CD4-positive, alpha-beta memory T cell (primary cell): ENCODE measurements at regions of chr14 and their contacts with region 1.

Region 1: GRCh38 chr14:98189062-98189461 is 1082.9 kb downstream of the BCL11B start:
- DNase-seq: peak in 1 of 5 donors; percentile 39
- H3K4me3 ChIP-seq: peak overlapping the region; percentile 38 to 42
- H3K4me3 Mint-ChIP-seq: peak overlapping the region; percentile 67 to 85 (median 80)
- H3K27ac ChIP-seq: peak overlapping the region; percentile 65
- H3K27ac Mint-ChIP-seq: peak overlapping the region; percentile 84 to 98 (median 94)
- H3K4me1 ChIP-seq: peaks cover 100% of the 10 kb centered on the region
- H3K4me1 Mint-ChIP-seq: peaks cover 84 to 100% (median 94%) of the 10 kb centered on the region in 4 donors
- H3K27me3 ChIP-seq: no peaks in the 10 kb centered on the region
- H3K27me3 Mint-ChIP-seq: no peaks in the 10 kb centered on the region

Region 2: GRCh38 chr14:97994020-97994531 is 195.0 kb before region 1 on chr14:
- CTCF ChIA-PET with region 1: no interaction called
- POLR2A ChIA-PET with region 1: interaction called, 4 read pairs
- intact Hi-C with region 1: loop called (anchors 5 kb)
- DNase-seq: peak; percentile 66 to 75 (median 71)
- H3K4me3 ChIP-seq: no peak overlapping the region
- H3K4me3 Mint-ChIP-seq: peak overlapping the region in 7 of 8 donors; percentile 28 to 72 (median 67)
- H3K27ac ChIP-seq: peak overlapping the region; percentile 50
- H3K27ac Mint-ChIP-seq: peak overlapping the region; percentile 82 to 96 (median 92)
- H3K4me1 ChIP-seq: peaks cover 59% of the 10 kb centered on the region
- H3K4me1 Mint-ChIP-seq: peaks cover 54 to 78% (median 66%) of the 10 kb centered on the region in 4 donors
- H3K27me3 ChIP-seq: no peaks in the 10 kb centered on the region
- H3K27me3 Mint-ChIP-seq: no peaks in the 10 kb centered on the region

Region 3: GRCh38 chr14:98167705-98168104 is 21.4 kb before region 1 on chr14:
- CTCF ChIA-PET with region 1: interaction called, 13 read pairs
- POLR2A ChIA-PET with region 1: interaction called, 475 read pairs
- intact Hi-C with region 1: no loop called
- DNase-seq: peak in 2 of 5 donors; percentile 22 to 54
- H3K4me3 ChIP-seq: peak overlapping the region in 1 of 2 donors; percentile 15
- H3K4me3 Mint-ChIP-seq: peak overlapping the region in 7 of 8 donors; percentile 60 to 90 (median 71)
- H3K27ac ChIP-seq: peak overlapping the region; percentile 45
- H3K27ac Mint-ChIP-seq: peak overlapping the region; percentile 79 to 99 (median 90)
- H3K4me1 ChIP-seq: peaks cover 63% of the 10 kb centered on the region
- H3K4me1 Mint-ChIP-seq: peaks cover 53 to 82% (median 68%) of the 10 kb centered on the region in 4 donors
- H3K27me3 ChIP-seq: no peaks in the 10 kb centered on the region
- H3K27me3 Mint-ChIP-seq: no peaks in the 10 kb centered on the region

Region 4: GRCh38 chr14:98219638-98220037 is 30.6 kb after region 1 on chr14:
- CTCF ChIA-PET with region 1: interaction called, 6 read pairs
- POLR2A ChIA-PET with region 1: interaction called, 116 read pairs
- intact Hi-C with region 1: loop called (anchors 2 kb)
- DNase-seq: no peak
- H3K4me3 ChIP-seq: no peak overlapping the region
- H3K4me3 Mint-ChIP-seq: peak overlapping the region in 3 of 8 donors; percentile 3 to 51 (median 32)
- H3K27ac ChIP-seq: no peak overlapping the region
- H3K27ac Mint-ChIP-seq: peak overlapping the region in 2 of 7 donors; percentile 60 to 90
- H3K4me1 ChIP-seq: peaks cover 66% of the 10 kb centered on the region
- H3K4me1 Mint-ChIP-seq: peaks cover 27 to 42% (median 37%) of the 10 kb centered on the region in 4 donors
- H3K27me3 ChIP-seq: no peaks in the 10 kb centered on the region
- H3K27me3 Mint-ChIP-seq: no peaks in the 10 kb centered on the region

Region 5: DNA sequence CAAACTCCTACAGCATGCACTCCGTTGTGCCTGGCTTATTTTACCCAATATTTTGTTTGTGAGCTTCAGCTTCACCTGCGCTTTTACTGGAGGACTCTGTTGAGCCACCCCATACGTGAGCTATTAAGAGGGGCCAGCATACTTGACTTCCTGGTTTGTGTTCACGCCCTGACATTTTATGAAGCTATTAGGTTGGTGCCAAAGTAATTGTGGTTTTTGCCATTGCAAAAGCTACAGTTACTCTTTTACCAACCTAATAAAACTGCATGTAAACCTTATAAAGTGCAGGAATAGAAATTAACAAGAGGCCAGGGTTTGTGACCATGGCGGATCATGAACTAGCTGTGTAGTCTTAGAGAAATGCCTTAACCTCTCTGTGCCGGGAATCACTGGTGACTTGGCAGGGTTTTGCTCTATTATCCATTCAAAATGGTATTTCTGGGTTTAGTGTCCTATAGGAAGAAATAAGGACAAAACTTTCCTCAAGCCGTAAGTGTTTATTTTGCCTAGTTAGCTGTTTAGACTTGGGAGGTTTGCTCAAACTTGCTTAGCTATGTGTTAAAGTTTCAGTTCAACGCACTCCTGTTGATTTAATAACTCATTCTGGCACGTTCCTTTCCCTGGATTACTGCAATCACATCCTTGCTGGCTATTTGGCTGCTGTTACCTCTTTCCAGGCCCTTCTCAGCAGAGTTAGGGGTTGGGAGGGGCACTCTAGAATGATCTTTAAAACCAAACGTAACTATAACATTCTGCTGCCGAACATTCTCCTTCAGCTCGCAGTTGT is 55.3 kb after region 1 on chr14:
- CTCF ChIA-PET with region 1: no interaction called
- POLR2A ChIA-PET with region 1: interaction called, 10 read pairs
- intact Hi-C with region 1: no loop called
- DNase-seq: no peak
- H3K4me3 ChIP-seq: no peak overlapping the region
- H3K4me3 Mint-ChIP-seq: no peak overlapping the region
- H3K27ac ChIP-seq: no peak overlapping the region
- H3K27ac Mint-ChIP-seq: peak overlapping the region in 3 of 7 donors; percentile 10 to 66 (median 47)
- H3K4me1 ChIP-seq: no peaks in the 10 kb centered on the region
- H3K4me1 Mint-ChIP-seq: peaks cover 0 to 13% (median 2%) of the 10 kb centered on the region in 4 donors
- H3K27me3 ChIP-seq: no peaks in the 10 kb centered on the region
- H3K27me3 Mint-ChIP-seq: no peaks in the 10 kb centered on the region

Region 6: DNA sequence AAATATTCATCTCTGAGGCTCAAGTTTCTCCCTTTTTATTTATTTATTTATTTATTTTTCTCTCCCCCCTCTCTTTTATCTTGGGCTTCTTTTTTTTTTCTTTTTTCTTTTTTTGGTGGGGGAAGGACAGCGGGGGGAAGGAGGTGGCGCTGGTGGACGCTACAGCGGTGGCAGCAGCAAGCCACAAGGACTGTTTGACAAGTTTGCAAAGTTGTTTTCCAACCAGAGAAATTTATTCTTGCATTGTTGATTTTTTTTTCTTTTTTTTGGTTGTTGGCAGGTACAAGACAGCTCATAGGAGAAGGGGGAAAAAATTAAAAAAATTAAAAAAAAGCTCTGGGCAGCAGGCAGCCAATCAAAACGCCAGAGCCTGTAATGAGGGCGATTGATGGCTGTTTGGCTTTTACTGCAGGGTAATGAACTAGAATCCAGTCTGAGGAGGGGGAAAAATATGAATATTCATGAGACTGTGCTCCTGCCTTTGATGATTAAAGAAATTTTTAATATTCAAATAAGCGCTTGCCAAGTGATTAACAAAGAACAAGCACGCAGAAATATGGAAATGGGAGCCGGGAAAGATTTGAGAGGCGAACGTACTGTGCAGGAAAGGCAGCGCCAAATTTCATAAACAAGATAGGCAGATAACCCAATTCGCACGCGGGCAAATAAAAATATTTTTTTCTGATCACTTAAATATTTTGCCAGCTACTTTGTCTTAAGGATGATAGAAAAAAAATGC is 1046.7 kb after region 1 on chr14:
- CTCF ChIA-PET with region 1: no interaction called
- POLR2A ChIA-PET with region 1: interaction called, 10 read pairs
- intact Hi-C with region 1: no loop called
- DNase-seq: peak in 4 of 5 donors; percentile 46 to 60 (median 51)
- H3K4me3 ChIP-seq: peak overlapping the region; percentile 14 to 53
- H3K4me3 Mint-ChIP-seq: peak overlapping the region; percentile 83 to 99 (median 90)
- H3K27ac ChIP-seq: peak overlapping the region; percentile 98
- H3K27ac Mint-ChIP-seq: peak overlapping the region; percentile 98 to 99 (median 99)
- H3K4me1 ChIP-seq: peaks cover 100% of the 10 kb centered on the region
- H3K4me1 Mint-ChIP-seq: peaks cover 80 to 98% (median 90%) of the 10 kb centered on the region in 4 donors
- H3K27me3 ChIP-seq: no peaks in the 10 kb centered on the region
- H3K27me3 Mint-ChIP-seq: no peaks in the 10 kb centered on the region